ENCODE measurements at regions of chrX and their contacts with region 1.

Region 1: GRCh38 chrX:151938172-151938571 is 25.5 kb downstream of the MAGEA4 start:
- DNase-seq: no peak
- ATAC-seq: no peak
- H3K4me3 Mint-ChIP-seq: no peak overlapping the region
- H3K27ac Mint-ChIP-seq: no peak overlapping the region
- H3K4me1 Mint-ChIP-seq: no peaks in the 10 kb centered on the region
- H3K27me3 Mint-ChIP-seq: no peaks in the 10 kb centered on the region; the same call in 1 of the 2 replicates
- CTCF ChIP-seq: no peak

Region 2: DNA sequence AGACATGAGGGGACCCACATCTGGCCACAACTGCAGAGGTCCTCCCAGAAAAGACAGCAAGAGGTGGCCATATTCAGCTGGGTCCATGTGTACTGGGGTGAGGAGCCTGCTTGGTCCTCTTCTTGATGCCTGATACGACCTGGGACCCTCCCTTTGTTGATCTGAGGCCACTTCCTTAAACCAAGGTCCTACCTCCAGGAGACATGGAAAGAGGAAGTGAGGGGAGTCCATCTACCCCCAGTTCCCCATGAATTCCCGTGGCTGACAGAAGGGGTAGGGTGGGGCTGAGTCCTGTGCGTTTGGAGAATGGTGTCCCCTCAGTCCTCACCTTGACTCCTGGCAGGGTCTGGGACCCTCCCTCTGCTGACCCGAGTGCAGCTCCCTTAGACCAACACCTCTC is 198.1 kb after region 1 on chrX:
- CTCF ChIA-PET with region 1: no interaction called
- POLR2A ChIA-PET with region 1: interaction called, 12 read pairs
- DNase-seq: no peak
- ATAC-seq: no peak
- H3K4me3 Mint-ChIP-seq: no peak overlapping the region
- H3K27ac Mint-ChIP-seq: no peak overlapping the region
- H3K4me1 Mint-ChIP-seq: no peaks in the 10 kb centered on the region
- H3K27me3 Mint-ChIP-seq: no peaks in the 10 kb centered on the region
- CTCF ChIP-seq: no peak

Measured in WTC11 (cell line).